AG04449 (cell line): ENCODE measurements at regions of chr22 and their contacts with region 1.

Region 1: GRCh38 chr22:30104501-30105156 is 24.4 kb downstream of the HORMAD2 start:
- DNase-seq: no peak
- H3K4me3 ChIP-seq: no peak overlapping the region
- CTCF ChIP-seq: no peak

Region 2: DNA sequence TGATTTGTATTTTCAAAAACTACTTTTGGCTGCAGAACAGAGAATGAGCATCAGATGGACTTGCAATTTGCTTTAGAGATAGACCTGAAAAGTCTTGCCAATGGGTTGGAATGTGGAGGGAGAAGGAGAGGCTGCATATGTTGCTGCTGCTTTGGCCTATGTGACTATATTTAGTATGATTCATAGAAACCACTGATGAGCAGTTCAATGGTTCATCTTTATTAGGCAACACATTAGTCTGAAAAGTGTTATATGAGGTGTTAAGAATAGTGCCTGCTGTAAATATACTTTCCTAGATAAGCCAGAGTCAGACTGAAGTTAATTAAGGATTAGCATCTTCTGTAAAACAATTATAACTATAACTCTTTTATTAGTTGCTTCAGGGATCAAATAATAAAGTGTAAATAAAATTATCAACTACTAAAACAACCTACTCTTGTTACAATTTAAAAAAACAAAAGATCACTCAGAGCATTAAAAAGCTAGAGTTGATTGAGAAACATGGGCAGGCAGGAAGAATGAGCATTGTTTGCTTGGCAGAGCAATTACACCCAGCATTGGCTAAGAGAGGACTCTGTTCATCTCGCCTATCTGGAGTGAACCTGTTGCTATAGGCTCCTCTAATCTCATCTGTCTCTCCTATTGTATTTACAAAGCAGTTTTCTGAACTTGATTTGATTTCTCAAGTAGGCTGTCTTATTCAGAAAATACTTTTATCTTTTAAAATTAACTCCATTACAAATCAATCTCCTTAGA is 11.9 kb after region 1 on chr22:
- CTCF ChIA-PET with region 1: interaction called, 52 read pairs
- POLR2A ChIA-PET with region 1: interaction called, 3 read pairs
- DNase-seq: peak; percentile 31
- H3K4me3 ChIP-seq: no peak overlapping the region
- CTCF ChIP-seq: no peak

Region 3: GRCh38 chr22:30205281-30206115 is 100.9 kb after region 1 on chr22:
- CTCF ChIA-PET with region 1: interaction called, 18 read pairs
- POLR2A ChIA-PET with region 1: no interaction called
- DNase-seq: peak; percentile 90
- H3K4me3 ChIP-seq: no peak overlapping the region
- CTCF ChIP-seq: no peak

Region 4: DNA sequence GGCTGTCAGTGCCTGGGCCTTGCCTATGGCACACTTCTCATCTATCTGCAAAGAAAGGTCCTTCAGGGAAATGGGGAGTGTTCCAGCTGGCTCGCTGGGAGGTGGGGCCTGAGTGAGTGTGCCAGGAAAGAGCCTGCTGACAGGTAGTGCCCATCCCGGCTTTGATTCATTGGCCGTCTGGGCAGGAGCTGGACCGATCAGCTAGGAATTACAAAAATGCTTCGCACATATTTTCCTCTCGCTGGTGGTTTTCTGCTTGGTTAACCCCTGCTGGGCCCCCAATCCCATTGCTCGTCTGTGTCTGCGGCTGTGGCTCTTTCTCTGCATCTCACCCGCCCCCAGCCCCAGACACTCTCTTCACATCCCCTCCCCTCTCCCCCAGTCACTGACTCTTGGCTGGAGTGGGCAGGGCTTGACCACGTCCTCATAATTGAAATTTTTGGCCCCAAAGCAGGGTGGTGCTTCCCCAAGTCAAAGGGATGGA is 131.1 kb after region 1 on chr22:
- CTCF ChIA-PET with region 1: interaction called, 48 read pairs
- POLR2A ChIA-PET with region 1: no interaction called
- DNase-seq: peak; percentile 90
- H3K4me3 ChIP-seq: no peak overlapping the region
- CTCF ChIP-seq: no peak

Region 5: GRCh38 chr22:30245985-30246901 is 141.6 kb after region 1 on chr22 and contains the start of gene LIF:
- CTCF ChIA-PET with region 1: interaction called, 19 read pairs
- POLR2A ChIA-PET with region 1: no interaction called
- DNase-seq: no peak
- H3K4me3 ChIP-seq: peak within 1 kb of the TSS; percentile 75
- CTCF ChIP-seq: peak; percentile 30

Region 6: DNA sequence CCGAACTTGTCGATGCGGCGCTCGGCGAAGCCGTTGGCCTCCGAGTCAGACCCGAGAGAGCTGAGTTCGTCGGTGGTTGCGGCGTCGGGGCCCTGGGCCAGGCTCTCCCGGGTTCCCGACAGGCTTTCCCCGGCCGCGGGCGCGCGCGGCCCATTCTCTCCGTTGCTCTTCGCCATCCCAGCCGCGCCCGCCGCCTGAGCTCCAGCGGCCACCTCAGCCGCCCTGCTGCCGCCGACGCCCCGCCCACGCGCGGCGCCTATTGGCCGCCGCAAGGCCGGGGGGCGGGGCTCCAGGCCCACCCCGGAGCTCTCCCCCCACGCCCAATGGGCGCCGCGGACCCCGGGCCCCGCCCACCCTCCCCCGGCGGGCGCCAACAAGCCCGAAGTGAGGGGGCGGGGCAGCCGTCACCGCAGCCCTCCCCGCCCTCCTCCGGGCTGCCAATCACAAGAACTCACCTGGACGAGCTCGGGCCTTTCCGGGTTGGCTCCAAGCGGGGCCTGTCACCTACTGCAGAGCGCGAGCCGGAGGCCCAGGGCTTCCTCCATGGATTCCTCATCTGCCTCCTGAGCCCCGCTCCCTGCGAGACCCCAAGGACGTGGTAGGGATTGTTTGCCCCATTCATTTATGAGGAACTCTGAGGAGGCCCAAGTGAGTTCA is 222.2 kb after region 1 on chr22 and contains the start of gene TBC1D10A:
- CTCF ChIA-PET with region 1: interaction called, 10 read pairs
- POLR2A ChIA-PET with region 1: no interaction called
- DNase-seq: no peak
- H3K4me3 ChIP-seq: peak within 1 kb of the TSS; percentile 87
- CTCF ChIP-seq: no peak